ENCODE measurements at regions of chr5 and their contacts with region 1.

Region 1: DNA sequence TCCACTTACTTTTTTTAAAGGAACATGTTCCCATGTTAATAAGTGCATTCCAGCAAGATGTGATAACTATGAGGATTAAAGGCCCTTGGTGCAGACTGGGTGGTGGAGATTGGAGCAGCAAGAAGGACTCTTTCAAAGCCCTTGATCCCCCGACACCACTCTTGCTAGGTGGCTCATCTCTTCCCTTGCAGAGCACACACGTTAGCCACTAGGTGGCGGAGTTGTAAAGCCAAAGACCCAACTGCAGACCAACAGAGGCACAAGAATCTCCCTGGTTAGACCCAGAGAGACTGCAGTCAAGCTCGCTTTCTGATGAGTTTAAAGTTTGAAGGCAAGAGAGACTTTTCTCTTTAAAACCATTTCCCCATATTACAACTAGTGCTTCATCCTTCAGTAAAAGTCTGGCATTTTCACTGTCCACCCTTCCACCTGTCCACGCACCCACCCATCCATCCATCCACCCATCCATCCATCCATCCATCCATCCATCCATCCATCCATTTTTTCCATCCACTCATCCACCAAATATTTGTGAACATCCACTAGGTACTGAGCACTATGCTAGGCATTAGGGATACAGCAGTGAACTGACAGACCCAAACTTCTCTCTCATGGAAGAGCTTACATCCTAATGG is 226.9 kb downstream of the MSX2 start:
- DNase-seq: peak; percentile 21
- H3K4me3 Mint-ChIP-seq: no peak overlapping the region
- H3K27ac Mint-ChIP-seq: no peak overlapping the region
- H3K4me1 Mint-ChIP-seq: no peaks in the 10 kb centered on the region
- H3K27me3 Mint-ChIP-seq: peaks cover 8% of the 10 kb centered on the region

Region 2: DNA sequence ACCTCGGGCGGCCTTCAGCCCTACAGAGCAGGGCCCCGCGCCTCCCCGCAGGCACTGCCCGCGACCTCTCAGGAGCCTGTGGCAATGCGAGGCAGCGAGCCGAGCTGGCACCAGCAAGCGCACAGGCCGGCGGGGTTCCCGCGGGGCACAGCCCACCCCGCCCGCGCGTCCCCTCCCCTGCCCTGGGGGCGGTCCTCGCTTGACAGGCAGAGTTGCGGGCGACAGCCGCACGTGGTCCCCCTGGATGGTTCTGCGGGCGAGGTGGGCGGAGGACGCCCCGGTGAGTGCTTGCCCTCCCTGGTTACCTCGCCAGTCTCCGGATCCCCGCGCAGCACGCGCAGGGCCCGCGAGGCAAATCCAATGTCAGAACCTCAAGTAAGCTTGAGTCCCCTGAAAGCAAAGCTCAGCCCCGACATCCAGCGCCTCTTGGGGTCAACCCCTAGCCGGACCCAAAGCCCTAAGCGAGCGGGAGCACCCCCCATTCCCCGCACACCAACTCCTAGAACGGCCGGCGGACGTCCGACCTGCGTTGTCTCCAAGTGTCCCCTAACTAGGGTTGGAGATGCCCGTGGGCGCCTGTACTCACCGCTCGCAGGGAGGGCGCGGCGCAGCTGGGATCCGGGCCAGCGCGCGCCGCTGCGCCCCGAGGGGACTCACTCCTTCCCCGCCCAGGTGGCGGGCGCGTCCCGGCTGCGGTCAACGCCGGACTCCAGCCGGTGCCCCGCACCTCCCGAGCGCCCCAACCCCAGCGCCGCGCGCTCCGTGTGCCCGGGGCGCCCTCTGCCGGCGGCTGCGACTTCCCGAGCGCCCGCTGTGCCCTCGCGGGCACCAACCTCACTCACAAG is 493.0 kb after region 1 on chr5 and contains the start of gene DRD1:
- intact Hi-C with region 1: loop called (anchors 1 kb)
- DNase-seq: peak; percentile 28
- H3K4me3 Mint-ChIP-seq: peak within 1 kb of the TSS; percentile 71
- H3K27ac Mint-ChIP-seq: no peak within 1 kb of the TSS
- H3K4me1 Mint-ChIP-seq: peaks cover 5% of the 10 kb centered on the region
- H3K27me3 Mint-ChIP-seq: peaks cover 75% of the 10 kb centered on the region
- total RNA-seq, gene DRD1: not detected in 2 replicates

Region 3: GRCh38 chr5:175464074-175464941 is 513.0 kb after region 1 on chr5:
- intact Hi-C with region 1: loop called (anchors 1 kb)
- DNase-seq: peak; percentile 57
- H3K4me3 Mint-ChIP-seq: no peak overlapping the region
- H3K27ac Mint-ChIP-seq: no peak overlapping the region
- H3K4me1 Mint-ChIP-seq: peaks cover 20% of the 10 kb centered on the region
- H3K27me3 Mint-ChIP-seq: peaks cover 8% of the 10 kb centered on the region

Region 4: DNA sequence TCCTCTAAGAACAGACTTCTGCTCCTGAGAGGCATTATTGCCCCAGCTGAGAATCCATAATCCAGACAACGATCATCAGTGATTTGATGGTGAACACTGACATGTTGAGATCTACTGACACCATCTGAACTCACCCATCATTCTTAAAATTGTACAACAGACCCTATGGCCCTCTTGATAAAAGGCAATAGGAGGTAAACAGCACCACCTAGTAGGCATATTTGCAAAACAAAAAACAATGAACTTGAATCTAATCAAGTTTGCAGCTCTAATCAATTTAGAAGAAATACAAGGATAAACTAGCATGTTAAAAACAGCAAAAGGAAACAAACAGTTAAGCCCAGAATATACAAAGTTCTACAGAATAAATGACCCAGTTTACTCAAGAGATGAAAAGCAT is 616.7 kb after region 1 on chr5:
- intact Hi-C with region 1: loop called (anchors 1 kb)
- DNase-seq: no peak
- H3K4me3 Mint-ChIP-seq: no peak overlapping the region
- H3K27ac Mint-ChIP-seq: no peak overlapping the region
- H3K4me1 Mint-ChIP-seq: peaks cover 6% of the 10 kb centered on the region
- H3K27me3 Mint-ChIP-seq: peaks cover 25% of the 10 kb centered on the region

Region 5: DNA sequence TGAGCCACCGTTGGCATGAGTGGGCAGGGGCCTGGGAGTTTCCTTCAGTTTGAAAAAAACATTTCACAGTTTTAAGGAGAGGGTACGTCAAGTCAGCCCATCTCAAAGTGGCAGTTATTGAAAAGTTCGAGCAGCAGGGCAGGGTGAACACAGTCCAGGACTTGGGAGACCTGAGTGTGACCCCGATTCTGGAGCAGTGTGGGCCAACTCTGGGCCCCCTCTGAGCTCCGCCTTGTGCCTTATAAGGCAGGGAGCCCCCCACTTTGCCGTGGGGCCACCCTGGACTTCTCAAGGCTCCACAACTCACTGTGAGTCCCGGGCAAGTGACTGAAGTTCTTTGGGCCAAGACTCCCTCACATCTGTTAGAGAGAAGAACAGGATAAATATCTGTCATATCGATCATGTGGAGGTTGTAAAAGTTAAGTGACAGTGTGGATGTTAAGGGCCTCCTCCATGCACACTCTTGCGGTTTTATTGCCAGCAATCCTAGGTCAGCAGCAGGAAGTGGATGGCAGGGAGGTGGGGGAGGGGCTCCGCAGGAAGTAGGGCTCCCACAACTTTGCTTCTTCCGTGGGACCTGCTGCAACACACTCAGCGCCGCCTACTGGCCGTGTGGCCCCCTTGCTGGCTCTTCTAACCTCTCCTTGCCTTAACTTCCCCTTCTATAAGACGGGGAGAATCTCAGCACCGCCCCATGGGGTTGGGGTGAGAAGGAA is 745.0 kb after region 1 on chr5:
- intact Hi-C with region 1: loop called (anchors 5 kb)
- DNase-seq: peak; percentile 63
- H3K4me3 Mint-ChIP-seq: peak overlapping the region; percentile 33
- H3K27ac Mint-ChIP-seq: peak overlapping the region; percentile 78
- H3K4me1 Mint-ChIP-seq: peaks cover 39% of the 10 kb centered on the region
- H3K27me3 Mint-ChIP-seq: no peaks in the 10 kb centered on the region

Region 6: DNA sequence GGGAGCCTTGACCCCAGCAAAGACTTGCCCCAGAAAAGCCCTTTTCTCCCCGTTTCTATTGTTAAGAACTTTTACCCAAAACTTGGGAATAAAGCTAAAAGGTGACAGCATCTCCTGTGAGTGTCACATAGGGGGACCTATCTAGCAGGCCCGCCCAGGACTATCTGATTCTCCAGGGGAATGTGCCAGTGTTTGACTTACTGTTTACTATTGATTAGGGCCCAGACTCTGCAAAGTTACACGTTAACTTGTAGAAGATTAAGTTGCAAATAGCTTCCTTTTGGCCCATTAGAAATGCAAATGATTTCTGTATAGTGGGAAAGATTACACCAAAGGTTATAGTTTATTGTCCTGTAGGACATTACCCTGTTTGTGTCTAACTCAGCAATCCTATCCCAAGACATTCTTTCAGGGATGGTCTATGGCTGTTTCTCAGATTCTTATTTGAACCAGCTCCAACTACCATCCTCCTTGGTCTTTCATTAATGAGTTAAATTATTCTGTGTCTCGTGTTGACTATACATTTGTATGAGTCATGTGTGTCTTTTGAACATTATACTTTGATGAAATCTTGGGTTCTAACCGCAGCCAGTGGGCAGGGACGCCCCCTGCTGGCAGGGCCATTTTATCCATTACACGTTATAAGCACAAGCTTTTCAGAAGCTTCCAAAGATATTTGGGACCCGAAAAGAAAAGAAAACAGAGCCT is 767.3 kb after region 1 on chr5:
- intact Hi-C with region 1: loop called (anchors 5 kb)
- DNase-seq: peak; percentile 38
- H3K4me3 Mint-ChIP-seq: no peak overlapping the region
- H3K27ac Mint-ChIP-seq: no peak overlapping the region
- H3K4me1 Mint-ChIP-seq: peaks cover 7% of the 10 kb centered on the region
- H3K27me3 Mint-ChIP-seq: peaks cover 4% of the 10 kb centered on the region

Measured in activated T-helper 1 cell treated with anti-CD3 and anti-CD28 coated beads, Interleukin-12 subunit alpha, Interleukin-12 subunit beta, Interleukin-2, Interleukin-4 antibody, amounts not matched to agents 30 ng/mL and 10 ng/mL and 1 ng/mL, durations not matched to agents 14 hours and 24 hours and 36 hours (primary cell).